Caco-2 (cell line): ENCODE measurements at regions of chr2 and their contacts with region 1.

Region 1: GRCh38 chr2:75608684-75609333 is 37.8 kb upstream of the MRPL19 start:
- DNase-seq: peak; percentile 64 to 74
- H3K4me3 ChIP-seq: peak overlapping the region; percentile 22
- H3K4me3 Mint-ChIP-seq: peak overlapping the region; percentile 38
- H3K27ac Mint-ChIP-seq: no peak overlapping the region
- H3K4me1 ChIP-seq: peaks cover 11% of the 10 kb centered on the region; the same call in 1 of the 2 replicates
- H3K4me1 Mint-ChIP-seq: peaks cover 9% of the 10 kb centered on the region
- H3K27me3 ChIP-seq: no peaks in the 10 kb centered on the region; the same call in 1 of the 2 replicates
- H3K27me3 Mint-ChIP-seq: peaks cover 20% of the 10 kb centered on the region
- CTCF ChIP-seq: peak; percentile 91 to 96

Region 2: GRCh38 chr2:75480971-75481836 is 127.6 kb before region 1 on chr2:
- CTCF ChIA-PET with region 1: no interaction called
- POLR2A ChIA-PET with region 1: no interaction called
- intact Hi-C with region 1: loop called (anchors 5 kb)
- DNase-seq: no peak
- H3K4me3 ChIP-seq: no peak overlapping the region
- H3K4me3 Mint-ChIP-seq: no peak overlapping the region
- H3K27ac Mint-ChIP-seq: no peak overlapping the region
- H3K4me1 ChIP-seq: no peaks in the 10 kb centered on the region
- H3K4me1 Mint-ChIP-seq: no peaks in the 10 kb centered on the region
- H3K27me3 ChIP-seq: no peaks in the 10 kb centered on the region
- H3K27me3 Mint-ChIP-seq: peaks cover 20% of the 10 kb centered on the region
- CTCF ChIP-seq: peak; percentile 37 to 55

Region 3: GRCh38 chr2:75574114-75574513 is 34.7 kb before region 1 on chr2:
- CTCF ChIA-PET with region 1: interaction called, 4 read pairs
- POLR2A ChIA-PET with region 1: no interaction called
- intact Hi-C with region 1: loop called (anchors 1 kb)
- DNase-seq: peak in 1 of 2 experiments; percentile 13
- H3K4me3 ChIP-seq: no peak overlapping the region
- H3K4me3 Mint-ChIP-seq: no peak overlapping the region
- H3K27ac Mint-ChIP-seq: no peak overlapping the region
- H3K4me1 ChIP-seq: peaks cover 12% of the 10 kb centered on the region
- H3K4me1 Mint-ChIP-seq: peaks cover 16% of the 10 kb centered on the region
- H3K27me3 ChIP-seq: no peaks in the 10 kb centered on the region
- H3K27me3 Mint-ChIP-seq: peaks cover 4% of the 10 kb centered on the region
- CTCF ChIP-seq: no peak

Region 4: GRCh38 chr2:75705921-75706320 is 97.1 kb after region 1 on chr2:
- CTCF ChIA-PET with region 1: no interaction called
- POLR2A ChIA-PET with region 1: no interaction called
- intact Hi-C with region 1: no loop called
- DNase-seq: no peak
- H3K4me3 ChIP-seq: no peak overlapping the region
- H3K4me3 Mint-ChIP-seq: no peak overlapping the region
- H3K27ac Mint-ChIP-seq: no peak overlapping the region
- H3K4me1 ChIP-seq: peaks cover 7% of the 10 kb centered on the region; the same call in 1 of the 2 replicates
- H3K4me1 Mint-ChIP-seq: peaks cover 7% of the 10 kb centered on the region
- H3K27me3 ChIP-seq: no peaks in the 10 kb centered on the region
- H3K27me3 Mint-ChIP-seq: no peaks in the 10 kb centered on the region
- CTCF ChIP-seq: no peak

Region 5: GRCh38 chr2:75716406-75716805 is 107.6 kb after region 1 on chr2:
- CTCF ChIA-PET with region 1: no interaction called
- POLR2A ChIA-PET with region 1: no interaction called
- intact Hi-C with region 1: no loop called
- DNase-seq: no peak
- H3K4me3 ChIP-seq: no peak overlapping the region
- H3K4me3 Mint-ChIP-seq: no peak overlapping the region
- H3K27ac Mint-ChIP-seq: no peak overlapping the region
- H3K4me1 ChIP-seq: no peaks in the 10 kb centered on the region
- H3K4me1 Mint-ChIP-seq: peaks cover 15% of the 10 kb centered on the region
- H3K27me3 ChIP-seq: no peaks in the 10 kb centered on the region
- H3K27me3 Mint-ChIP-seq: peaks cover 6% of the 10 kb centered on the region
- CTCF ChIP-seq: no peak